Common myeloid progenitor, CD34-positive (primary cell): ENCODE measurements at regions of chr14 and their contacts with region 1.

Region 1: DNA sequence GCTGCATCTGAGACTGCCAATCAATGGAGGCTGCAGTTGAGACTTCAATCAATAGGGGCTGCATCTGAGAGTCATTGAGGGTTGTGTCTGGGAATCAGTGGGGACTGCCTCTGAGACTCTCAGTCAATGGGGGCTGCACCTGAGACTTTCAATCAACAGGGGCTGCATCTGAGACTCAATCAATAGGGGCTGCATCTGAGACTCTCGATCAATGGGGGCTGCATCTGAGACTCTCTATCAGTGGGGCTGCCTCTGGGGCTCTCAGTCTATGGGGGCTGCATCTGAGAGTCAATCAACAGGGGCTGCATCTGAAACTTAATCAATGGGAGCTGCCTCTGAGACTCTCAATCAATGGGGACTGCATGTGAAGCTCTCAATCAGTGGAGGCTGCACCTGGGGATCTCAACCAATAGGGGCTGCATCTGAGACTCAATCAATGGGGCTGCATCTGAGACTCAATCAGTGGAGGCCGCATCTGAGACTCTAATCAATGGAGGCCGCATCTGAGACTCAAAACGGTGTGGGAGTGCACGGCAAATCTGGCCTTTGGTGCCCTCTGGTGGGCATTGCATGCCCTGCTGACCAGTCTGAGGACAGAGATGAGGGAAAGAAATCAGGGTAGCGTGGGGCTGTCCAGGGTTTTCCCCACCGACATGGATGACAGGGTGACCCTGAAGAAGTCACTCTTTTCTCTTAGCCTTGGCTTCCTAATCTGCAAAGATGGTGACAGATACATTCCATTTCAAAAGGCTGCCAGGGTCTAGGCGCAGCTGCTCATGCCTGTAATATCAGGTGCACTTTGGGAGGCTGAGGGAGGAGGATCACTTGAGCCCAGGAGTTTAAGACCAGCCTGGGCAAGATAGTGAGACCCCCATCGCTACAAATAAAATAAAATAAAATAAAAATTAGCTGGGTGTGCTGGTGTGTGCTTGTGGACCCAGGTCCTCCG is 41.3 kb upstream of the EIF5 start:
- DNase-seq: peak; percentile 64 to 78 (median 70)
- H3K4me3 ChIP-seq: no peak overlapping the region
- H3K27ac ChIP-seq: no peak overlapping the region
- H3K4me1 ChIP-seq: no peaks in the 10 kb centered on the region
- H3K27me3 ChIP-seq: peaks cover 0 to 27% (median 8%) of the 10 kb centered on the region in 5 experiments

Region 2: DNA sequence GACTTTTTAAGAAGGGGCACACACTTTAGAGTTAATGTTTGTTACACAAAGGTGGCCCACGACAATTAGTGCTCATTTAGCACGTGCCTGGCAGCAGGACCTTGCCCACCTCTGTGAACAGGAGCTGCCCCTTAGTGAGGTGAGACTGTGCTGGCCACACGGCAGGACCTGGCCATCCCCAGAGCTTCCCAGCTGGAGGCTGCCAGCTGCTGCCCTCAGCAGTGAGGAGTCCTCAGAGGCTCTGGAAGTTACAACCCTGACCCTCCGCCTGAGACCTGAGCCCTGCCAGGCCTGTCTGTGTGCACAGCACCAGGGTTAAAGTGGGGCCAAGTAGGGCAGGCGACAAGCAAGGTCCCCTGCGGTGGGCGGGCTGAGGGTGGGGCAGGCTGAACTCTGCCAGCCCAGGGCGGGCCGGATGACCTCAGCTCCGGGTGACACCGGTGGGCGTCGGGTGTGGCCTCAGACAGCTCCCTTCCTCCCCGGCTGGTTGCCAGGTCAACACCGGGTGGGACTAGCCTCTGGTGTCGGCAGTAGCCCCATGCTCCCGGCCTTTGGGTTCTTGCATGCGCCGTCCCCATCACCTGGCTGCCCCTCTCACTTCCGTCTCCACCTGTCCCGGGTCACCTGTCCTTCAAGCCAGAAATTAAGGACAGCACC is 217.9 kb before region 1 on chr14:
- CTCF ChIA-PET with region 1: interaction called, 11 read pairs
- POLR2A ChIA-PET with region 1: interaction called, 3 read pairs
- DNase-seq: peak in 2 of 3 donors; percentile 26 to 43
- H3K4me3 ChIP-seq: peak overlapping the region in 3 of 7 experiments; percentile 33 to 64 (median 51)
- H3K27ac ChIP-seq: no peak overlapping the region
- H3K4me1 ChIP-seq: peaks cover 0 to 13% (median 6%) of the 10 kb centered on the region in 4 experiments
- H3K27me3 ChIP-seq: peaks cover 0 to 7% (median 4%) of the 10 kb centered on the region in 5 experiments

Region 3: DNA sequence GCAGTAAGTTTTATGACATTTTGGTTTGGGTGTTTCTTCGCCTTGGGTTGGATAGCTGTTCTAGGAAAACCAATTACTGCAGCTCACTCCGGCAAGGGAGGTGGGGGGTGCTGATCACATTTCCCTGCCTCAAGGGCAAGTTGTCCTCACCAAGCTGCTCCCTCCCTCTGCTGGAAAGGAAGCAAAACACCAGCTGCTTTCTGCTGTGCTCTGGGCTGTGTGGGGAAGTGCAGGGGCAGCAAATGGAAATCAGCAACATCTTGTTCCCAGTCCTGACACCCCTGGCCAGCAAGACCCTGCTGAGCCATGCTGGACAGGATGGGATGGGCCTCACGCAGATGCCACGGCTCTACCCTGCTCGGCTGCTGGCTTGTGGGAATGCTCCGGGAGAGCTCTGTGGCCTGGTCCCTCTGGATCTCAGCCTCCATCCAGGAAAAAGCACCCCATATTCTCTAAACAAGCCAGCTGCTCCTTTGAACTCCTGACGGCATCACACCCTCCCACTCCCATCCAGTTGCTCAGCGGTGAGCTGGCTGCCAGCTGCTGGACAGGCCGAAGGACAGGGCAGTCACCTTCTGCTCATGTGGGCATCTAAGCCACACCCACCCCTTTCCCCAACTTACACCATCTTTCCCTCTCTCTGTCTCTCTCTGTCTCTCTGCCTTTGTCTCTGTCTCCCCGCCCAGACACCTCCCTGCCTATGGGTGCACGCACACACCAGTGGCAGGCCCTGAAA is 11.0 kb before region 1 on chr14:
- CTCF ChIA-PET with region 1: interaction called, 16 read pairs
- POLR2A ChIA-PET with region 1: no interaction called
- DNase-seq: peak in 2 of 3 donors; percentile 53 to 56
- H3K4me3 ChIP-seq: no peak overlapping the region
- H3K27ac ChIP-seq: no peak overlapping the region
- H3K4me1 ChIP-seq: peaks cover 0 to 9% (median 4%) of the 10 kb centered on the region in 4 experiments
- H3K27me3 ChIP-seq: peaks cover 23 to 94% (median 36%) of the 10 kb centered on the region in 5 experiments